Endothelial cell of umbilical vein (primary cell): ENCODE measurements at regions of chr12 and their contacts with region 1.

Region 1: GRCh38 chr12:115916910-115917668 is 360.4 kb downstream of the MED13L start:
- DNase-seq: peak; percentile 5
- H3K4me3 ChIP-seq: no peak overlapping the region
- H3K27ac ChIP-seq: no peak overlapping the region
- H3K4me1 ChIP-seq: no peaks in the 10 kb centered on the region
- H3K27me3 ChIP-seq: peaks cover 0 to 2% of the 10 kb centered on the region in 2 experiments
- CTCF ChIP-seq: peak; percentile 77 to 89
- POLR2A ChIP-seq: no peak

Region 2: DNA sequence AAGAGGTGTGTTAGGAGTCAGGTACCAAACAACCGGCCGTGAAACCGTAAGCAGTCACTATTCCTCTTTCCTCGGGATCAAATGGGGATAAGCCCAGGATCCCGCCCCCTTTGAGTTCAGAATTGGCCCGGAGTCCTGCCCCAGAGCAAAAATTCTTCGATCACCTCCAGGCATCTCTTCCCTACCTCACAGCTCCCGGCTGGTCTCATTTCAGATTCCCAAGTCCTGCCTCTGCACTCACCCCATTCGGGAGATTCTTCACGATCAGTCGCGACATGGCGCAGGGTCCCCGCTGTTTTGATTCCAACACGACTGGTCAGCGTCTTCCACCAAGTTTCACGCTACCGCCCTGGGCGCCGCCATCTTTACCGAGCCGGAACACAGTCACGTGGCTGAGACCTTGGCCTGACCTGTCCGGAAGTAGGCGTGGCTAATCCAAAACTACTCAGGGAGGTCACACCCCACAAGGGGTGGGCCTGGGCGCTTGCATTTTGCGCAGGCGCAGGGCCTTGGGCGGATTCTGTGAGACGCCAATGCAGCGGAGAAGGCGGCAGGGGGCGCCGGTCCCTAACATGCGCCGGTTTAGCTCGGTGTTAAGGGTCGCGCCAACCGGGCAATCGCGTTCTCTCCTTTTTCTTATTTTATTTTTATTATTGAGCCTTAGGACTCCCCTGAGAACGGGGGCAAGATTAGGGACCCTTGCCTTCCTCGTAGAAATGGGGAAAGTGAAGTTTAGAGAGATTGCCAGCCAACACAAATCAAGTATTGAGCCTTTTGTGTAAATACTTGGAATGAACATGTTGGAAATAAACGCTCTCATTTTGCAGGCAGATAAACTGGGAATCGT is 1950.9 kb before region 1 on chr12 and contains the start of gene RBM19:
- CTCF ChIA-PET with region 1: interaction called, 10 read pairs
- POLR2A ChIA-PET with region 1: no interaction called
- dilution Hi-C with region 1: no loop called
- intact Hi-C with region 1: no loop called
- DNase-seq: peak; percentile 98
- H3K4me3 ChIP-seq: peak within 1 kb of the TSS; percentile 54 to 85 (median 84)
- H3K27ac ChIP-seq: peak within 1 kb of the TSS; percentile 32
- H3K4me1 ChIP-seq: peaks cover 12% of the 10 kb centered on the region
- H3K27me3 ChIP-seq: peaks cover 0 to 2% of the 10 kb centered on the region in 2 experiments
- CTCF ChIP-seq: peak; percentile 94 to 96
- POLR2A ChIP-seq: peak; percentile 82
- total RNA-seq, gene RBM19: 34.0 and 34.4 TPM in 2 replicates

Region 3: DNA sequence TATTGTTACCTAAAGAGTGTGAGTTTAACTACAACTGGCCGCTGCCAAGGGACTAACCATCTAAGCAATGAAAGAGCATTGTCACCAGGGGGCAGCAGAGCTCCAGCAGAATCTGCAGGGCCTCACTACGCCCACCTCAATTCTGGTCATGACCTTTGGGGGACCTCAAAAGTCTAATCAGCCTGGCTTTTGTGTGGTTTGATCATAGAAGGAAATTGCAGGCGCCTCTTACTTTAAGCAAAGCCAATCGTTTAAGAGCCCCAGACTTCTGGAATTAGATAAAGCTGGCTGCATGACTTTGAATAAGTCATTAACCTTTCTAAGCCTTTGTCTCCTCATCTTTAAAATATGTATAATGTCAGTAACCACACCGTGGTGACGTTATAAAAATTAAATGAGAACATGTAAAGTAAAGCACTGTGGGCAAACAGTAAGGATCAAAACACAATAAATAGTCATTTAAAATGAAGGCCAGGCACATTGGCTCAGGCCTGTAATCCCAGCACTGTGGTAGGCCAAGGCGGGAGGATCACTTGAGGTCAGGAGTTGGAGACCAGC is 1291.7 kb before region 1 on chr12:
- CTCF ChIA-PET with region 1: interaction called, 92 read pairs
- POLR2A ChIA-PET with region 1: no interaction called
- dilution Hi-C with region 1: no loop called
- intact Hi-C with region 1: loop called (anchors 1 kb)
- DNase-seq: peak; percentile 29
- H3K4me3 ChIP-seq: no peak overlapping the region
- H3K27ac ChIP-seq: no peak overlapping the region
- H3K4me1 ChIP-seq: no peaks in the 10 kb centered on the region
- H3K27me3 ChIP-seq: no peaks in the 10 kb centered on the region
- CTCF ChIP-seq: peak; percentile 57 to 63
- POLR2A ChIP-seq: no peak

Region 4: DNA sequence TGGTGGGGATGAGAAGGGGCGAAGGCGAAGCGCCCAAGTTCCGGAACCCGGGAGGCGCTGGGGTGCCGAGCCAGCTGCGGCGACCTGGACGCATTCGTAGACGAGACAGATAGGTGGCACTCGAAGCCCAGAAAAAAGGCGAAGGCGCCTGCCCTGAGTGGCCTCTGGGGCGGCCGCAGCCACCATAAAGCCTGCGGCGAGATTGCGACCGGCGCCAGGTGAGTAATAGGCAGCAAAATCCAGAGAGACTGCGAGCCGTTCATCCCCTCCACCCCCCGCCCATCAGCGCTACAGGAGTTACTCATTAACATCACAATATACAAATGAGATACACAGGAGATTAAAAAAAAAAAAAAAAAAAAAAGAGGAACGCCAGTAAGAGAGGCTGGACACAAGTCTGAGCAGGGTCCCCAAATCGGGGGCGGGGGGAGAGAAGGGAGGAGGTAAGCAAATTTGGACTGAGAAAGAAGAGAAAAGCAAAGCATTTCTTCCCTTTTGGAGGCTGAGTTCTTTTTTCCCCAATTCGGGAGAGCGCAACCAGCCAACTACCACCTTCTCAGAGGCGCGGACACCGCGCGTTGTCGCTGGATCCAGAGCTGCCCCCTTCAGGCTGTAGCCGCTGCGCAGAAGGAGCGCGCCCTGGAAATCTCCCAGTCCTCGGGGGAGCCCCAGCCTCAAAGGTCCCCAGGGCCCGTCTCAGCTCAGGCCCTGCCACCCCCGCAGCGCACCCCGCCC is 1248.8 kb before region 1 on chr12:
- CTCF ChIA-PET with region 1: interaction called, 20 read pairs
- POLR2A ChIA-PET with region 1: no interaction called
- dilution Hi-C with region 1: no loop called
- intact Hi-C with region 1: loop called (anchors 1 kb)
- DNase-seq: peak; percentile 38
- H3K4me3 ChIP-seq: no peak overlapping the region
- H3K27ac ChIP-seq: no peak overlapping the region
- H3K4me1 ChIP-seq: no peaks in the 10 kb centered on the region
- H3K27me3 ChIP-seq: peaks cover 62 to 73% of the 10 kb centered on the region in 2 experiments
- CTCF ChIP-seq: peak; percentile 15 to 46
- POLR2A ChIP-seq: no peak

Region 5: GRCh38 chr12:115946867-115947696 is 30.0 kb after region 1 on chr12:
- CTCF ChIA-PET with region 1: interaction called, 11 read pairs
- POLR2A ChIA-PET with region 1: no interaction called
- dilution Hi-C with region 1: no loop called
- intact Hi-C with region 1: no loop called
- DNase-seq: no peak
- H3K4me3 ChIP-seq: no peak overlapping the region
- H3K27ac ChIP-seq: no peak overlapping the region
- H3K4me1 ChIP-seq: no peaks in the 10 kb centered on the region
- H3K27me3 ChIP-seq: no peaks in the 10 kb centered on the region
- CTCF ChIP-seq: peak; percentile 31 to 39
- POLR2A ChIP-seq: no peak